Activated CD8-positive, alpha-beta T cell treated with anti-CD3 and anti-CD28 coated beads, Interleukin-2, amount 10 ng/mL, durations not matched to agents 7 days and 5 days (primary cell): ENCODE measurements at regions of chr7 and their contacts with region 1.

Region 1: DNA sequence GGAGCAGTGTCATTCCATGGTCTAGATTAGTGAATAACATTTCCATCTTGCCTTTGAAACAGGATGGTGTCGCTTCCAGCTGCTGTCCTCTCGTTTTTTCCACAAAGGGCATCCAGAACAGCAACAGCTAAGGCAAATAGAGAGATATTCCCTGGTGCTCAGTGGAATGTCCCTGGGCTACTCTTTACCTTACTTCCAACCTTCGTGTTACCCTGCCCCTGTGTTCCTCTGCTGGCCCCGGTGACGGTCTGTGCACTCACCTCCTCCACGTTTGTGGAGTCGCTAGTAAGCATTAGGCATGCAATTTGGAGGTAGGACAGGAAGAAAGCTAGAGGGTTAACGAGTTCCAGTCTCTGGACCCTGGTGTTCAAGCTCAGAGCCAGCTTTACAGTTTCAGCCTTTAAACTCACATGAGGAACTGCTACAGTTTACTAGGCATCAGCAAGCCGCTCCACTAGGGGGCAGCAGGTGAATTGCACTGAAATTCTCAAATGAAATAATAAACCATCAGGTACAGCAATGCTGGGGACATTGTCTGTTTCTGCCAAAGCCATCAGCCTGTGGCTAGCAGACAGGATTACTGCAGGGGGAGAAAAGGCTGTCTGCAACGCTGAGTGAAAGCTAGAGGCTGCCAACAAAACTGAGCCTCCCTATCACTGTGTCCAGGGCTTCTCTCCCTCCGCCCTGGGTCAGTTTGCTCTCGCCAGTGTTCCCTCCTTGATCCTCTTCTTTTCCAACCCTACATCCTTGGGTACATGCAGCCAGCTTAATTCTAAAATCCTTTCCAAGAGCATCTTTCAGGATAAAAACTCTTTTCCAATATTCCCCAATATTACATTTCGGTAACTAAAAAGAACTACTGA is 9.0 kb downstream of the MRPL32 start:
- DNase-seq: peak; percentile 86
- ATAC-seq: peak; percentile 77
- H3K4me3 Mint-ChIP-seq: no peak overlapping the region
- H3K27ac Mint-ChIP-seq: no peak overlapping the region
- H3K4me1 Mint-ChIP-seq: peaks cover 16% of the 10 kb centered on the region
- H3K27me3 Mint-ChIP-seq: no peaks in the 10 kb centered on the region

Region 2: GRCh38 chr7:42650171-42650570 is 291.0 kb before region 1 on chr7:
- CTCF ChIA-PET with region 1: no interaction called
- POLR2A ChIA-PET with region 1: no interaction called
- DNase-seq: no peak
- ATAC-seq: no peak
- H3K4me3 Mint-ChIP-seq: no peak overlapping the region
- H3K27ac Mint-ChIP-seq: no peak overlapping the region
- H3K4me1 Mint-ChIP-seq: no peaks in the 10 kb centered on the region
- H3K27me3 Mint-ChIP-seq: no peaks in the 10 kb centered on the region

Region 3: DNA sequence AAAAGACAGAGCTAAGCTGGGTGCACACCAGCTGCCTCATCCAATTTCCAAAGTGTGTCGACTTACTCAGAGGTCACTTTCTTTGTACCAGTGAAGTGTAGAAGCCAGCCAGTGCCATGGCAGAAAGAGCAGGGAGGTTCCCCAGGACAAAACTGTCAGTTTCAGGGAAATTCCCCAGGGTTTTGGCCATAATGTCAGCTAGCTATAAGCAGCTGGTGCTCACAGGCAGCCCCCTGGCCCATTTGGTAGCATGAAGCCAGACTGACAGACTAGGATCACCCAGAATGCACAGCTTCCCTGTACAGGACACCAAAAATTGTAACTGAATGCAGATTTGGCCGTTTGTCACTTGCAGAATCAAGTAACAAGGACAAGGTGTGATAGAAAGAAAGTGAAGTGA is 19.5 kb after region 1 on chr7:
- CTCF ChIA-PET with region 1: interaction called, 10 read pairs
- POLR2A ChIA-PET with region 1: no interaction called
- DNase-seq: no peak
- ATAC-seq: no peak
- H3K4me3 Mint-ChIP-seq: no peak overlapping the region
- H3K27ac Mint-ChIP-seq: no peak overlapping the region
- H3K4me1 Mint-ChIP-seq: no peaks in the 10 kb centered on the region
- H3K27me3 Mint-ChIP-seq: peaks cover 5% of the 10 kb centered on the region

Region 4: GRCh38 chr7:43260980-43261878 is 320.0 kb after region 1 on chr7:
- CTCF ChIA-PET with region 1: interaction called, 37 read pairs
- POLR2A ChIA-PET with region 1: no interaction called
- DNase-seq: peak; percentile 75
- ATAC-seq: peak; percentile 82
- H3K4me3 Mint-ChIP-seq: no peak overlapping the region
- H3K27ac Mint-ChIP-seq: no peak overlapping the region
- H3K4me1 Mint-ChIP-seq: no peaks in the 10 kb centered on the region
- H3K27me3 Mint-ChIP-seq: peaks cover 12% of the 10 kb centered on the region